GM23248 (cell line): ENCODE measurements at regions of chr1 and their contacts with region 1.

Region 1: GRCh38 chr1:182084487-182085316 is 23.2 kb upstream of the ZNF648 start:
- DNase-seq: peak; percentile 79
- H3K4me3 ChIP-seq: no peak overlapping the region
- H3K27ac ChIP-seq: no peak overlapping the region
- H3K4me1 ChIP-seq: no peaks in the 10 kb centered on the region
- H3K27me3 ChIP-seq: no peaks in the 10 kb centered on the region

Region 2: DNA sequence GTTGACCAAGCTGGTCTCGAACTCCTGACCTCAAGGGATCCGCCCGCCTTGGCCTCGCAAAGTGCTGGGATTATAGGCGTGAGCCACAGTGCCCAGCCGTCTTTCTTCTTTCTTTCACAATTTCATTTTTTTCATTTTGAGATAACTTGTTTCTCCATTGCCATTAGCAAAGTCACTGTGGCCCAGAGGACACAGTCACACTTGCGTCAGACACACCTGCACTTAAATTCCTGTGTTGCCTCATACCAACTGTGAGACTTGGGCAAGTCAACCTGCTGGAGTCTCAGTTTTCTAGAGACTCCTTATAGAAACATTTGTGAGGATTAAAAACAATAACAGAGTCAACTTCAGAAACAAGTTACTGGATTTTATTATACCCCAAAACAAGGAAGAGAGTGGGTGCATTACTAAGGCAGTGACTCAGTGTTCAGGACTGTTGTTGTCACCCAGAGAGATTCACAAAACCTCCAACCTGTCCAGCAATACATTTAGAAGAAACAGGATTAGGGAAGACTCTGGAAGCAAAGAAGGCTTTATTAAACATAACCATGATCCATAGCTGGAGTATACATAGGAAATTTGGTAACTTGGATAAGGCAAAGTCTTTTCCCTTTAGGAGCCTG is 313.2 kb after region 1 on chr1:
- in situ Hi-C with region 1: loop called (anchors 5 kb)
- DNase-seq: peak; percentile 62
- H3K4me3 ChIP-seq: no peak overlapping the region
- H3K27ac ChIP-seq: no peak overlapping the region
- H3K4me1 ChIP-seq: peaks cover 13% of the 10 kb centered on the region
- H3K27me3 ChIP-seq: no peaks in the 10 kb centered on the region

Region 3: GRCh38 chr1:182789138-182790076 is 704.7 kb after region 1 on chr1 and contains the start of gene NPL:
- in situ Hi-C with region 1: loop called (anchors 25 kb)
- DNase-seq: peak; percentile 92
- H3K4me3 ChIP-seq: peak within 1 kb of the TSS; percentile 76
- H3K27ac ChIP-seq: no peak within 1 kb of the TSS
- H3K4me1 ChIP-seq: no peaks in the 10 kb centered on the region
- H3K27me3 ChIP-seq: no peaks in the 10 kb centered on the region
- total RNA-seq, gene NPL: 1.0 and 5.0 TPM in 2 replicates